PC-3 (cell line): ENCODE measurements at regions of chr22 and their contacts with region 1.

Region 1: GRCh38 chr22:45968751-45969413 is 8.1 kb downstream of the WNT7B start:
- DNase-seq: peak; percentile 94
- ATAC-seq: peak; percentile 86
- H3K4me3 ChIP-seq: peak overlapping the region; percentile 18; the same call in 1 of the 2 replicates
- H3K27ac ChIP-seq: peak overlapping the region; percentile 73
- H3K4me1 ChIP-seq: peaks cover 30% of the 10 kb centered on the region
- H3K27me3 ChIP-seq: no peaks in the 10 kb centered on the region
- CTCF ChIP-seq: no peak

Region 2: GRCh38 chr22:45911601-45912271 is 57.1 kb before region 1 on chr22:
- CTCF ChIA-PET with region 1: no interaction called
- POLR2A ChIA-PET with region 1: no interaction called
- intact Hi-C with region 1: loop called (anchors 2 kb)
- DNase-seq: peak; percentile 78
- ATAC-seq: peak; percentile 59
- H3K4me3 ChIP-seq: no peak overlapping the region
- H3K27ac ChIP-seq: peak overlapping the region; percentile 66
- H3K4me1 ChIP-seq: peaks cover 26% of the 10 kb centered on the region
- H3K27me3 ChIP-seq: no peaks in the 10 kb centered on the region
- CTCF ChIP-seq: peak; percentile 33; the same call in 1 of the 2 replicates

Region 3: DNA sequence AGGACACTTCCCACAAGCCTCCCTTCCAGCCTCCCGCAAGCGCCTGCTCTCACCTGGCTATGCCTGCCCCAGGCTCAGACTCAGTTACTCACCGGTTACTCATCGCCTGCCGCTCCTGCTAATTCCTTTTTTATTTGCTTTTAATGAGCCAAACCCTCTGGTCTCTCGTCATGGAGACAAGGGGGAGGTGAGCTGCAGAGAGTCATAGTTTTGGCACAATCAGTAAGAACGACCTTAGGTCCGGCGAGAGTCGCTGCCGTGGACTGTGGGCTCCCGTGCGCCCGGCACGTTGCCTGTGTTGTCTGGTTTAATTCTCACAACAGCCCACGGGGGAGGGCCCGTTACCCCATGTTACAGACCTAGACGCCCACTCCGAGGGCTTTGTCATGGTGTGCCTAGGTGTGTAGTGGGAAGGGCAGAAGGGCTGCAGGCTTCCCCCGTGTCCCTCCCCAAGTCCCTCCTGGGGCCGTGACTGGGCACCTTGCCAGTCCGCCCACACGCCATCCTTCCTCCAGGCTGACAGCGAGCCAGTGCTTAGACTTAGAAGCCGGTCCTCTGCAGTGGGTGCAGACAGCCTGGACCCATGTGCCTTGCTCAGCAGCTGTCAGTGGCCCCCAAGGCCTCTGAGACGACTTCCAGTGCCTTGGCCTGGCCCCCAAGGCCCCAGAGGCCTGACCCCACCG is 34.1 kb before region 1 on chr22:
- CTCF ChIA-PET with region 1: no interaction called
- POLR2A ChIA-PET with region 1: interaction called, 3 read pairs
- intact Hi-C with region 1: loop called (anchors 5 kb)
- DNase-seq: peak; percentile 96
- ATAC-seq: peak; percentile 88
- H3K4me3 ChIP-seq: peak overlapping the region; percentile 52; the same call in 1 of the 2 replicates
- H3K27ac ChIP-seq: peak overlapping the region; percentile 87
- H3K4me1 ChIP-seq: peaks cover 30% of the 10 kb centered on the region
- H3K27me3 ChIP-seq: no peaks in the 10 kb centered on the region
- CTCF ChIP-seq: no peak